ENCODE measurements at regions of chr3 and their contacts with region 1.

Region 1: GRCh38 chr3:48918388-48919214 is at the start of gene ARIH2:
- DNase-seq: peak; percentile 95
- H3K4me3 ChIP-seq: peak within 1 kb of the TSS; percentile 78
- H3K27ac ChIP-seq: peak within 1 kb of the TSS; percentile 93
- H3K4me1 ChIP-seq: peaks cover 23% of the 10 kb centered on the region
- CTCF ChIP-seq: peak; percentile 27; the same call in 1 of the 2 replicates
- total RNA-seq, gene ARIH2: 121 and 124 TPM in 2 replicates

Region 2: GRCh38 chr3:48273594-48274211 is 644.9 kb before region 1 on chr3:
- CTCF ChIA-PET with region 1: no interaction called
- POLR2A ChIA-PET with region 1: no interaction called
- intact Hi-C with region 1: no loop called
- DNase-seq: peak; percentile 76
- H3K4me3 ChIP-seq: no peak overlapping the region
- H3K27ac ChIP-seq: no peak overlapping the region
- H3K4me1 ChIP-seq: no peaks in the 10 kb centered on the region
- CTCF ChIP-seq: peak; percentile 88

Region 3: GRCh38 chr3:48743773-48744172 is 174.8 kb before region 1 on chr3:
- CTCF ChIA-PET with region 1: no interaction called
- POLR2A ChIA-PET with region 1: no interaction called
- intact Hi-C with region 1: no loop called
- DNase-seq: no peak
- H3K4me3 ChIP-seq: no peak overlapping the region
- H3K27ac ChIP-seq: no peak overlapping the region
- H3K4me1 ChIP-seq: peaks cover 5% of the 10 kb centered on the region
- CTCF ChIP-seq: no peak

Region 4: GRCh38 chr3:48847504-48848423 is 70.8 kb before region 1 on chr3 and contains the start of gene PRKAR2A:
- CTCF ChIA-PET with region 1: no interaction called
- POLR2A ChIA-PET with region 1: interaction called, 3 read pairs
- intact Hi-C with region 1: loop called (anchors 2 kb)
- DNase-seq: peak; percentile 90
- H3K4me3 ChIP-seq: peak within 1 kb of the TSS; percentile 82
- H3K27ac ChIP-seq: no peak within 1 kb of the TSS
- H3K4me1 ChIP-seq: peaks cover 18% of the 10 kb centered on the region
- CTCF ChIP-seq: no peak
- total RNA-seq, gene PRKAR2A: 13.8 and 16.0 TPM in 2 replicates

Region 5: GRCh38 chr3:48898383-48899234 is 20.0 kb before region 1 on chr3 and contains the start of gene SLC25A20:
- CTCF ChIA-PET with region 1: interaction called, 3 read pairs
- POLR2A ChIA-PET with region 1: interaction called, 10 read pairs
- intact Hi-C with region 1: loop called (anchors 1 kb)
- DNase-seq: peak; percentile 93
- H3K4me3 ChIP-seq: peak within 1 kb of the TSS; percentile 85
- H3K27ac ChIP-seq: peak within 1 kb of the TSS; percentile 36
- H3K4me1 ChIP-seq: peaks cover 36% of the 10 kb centered on the region
- CTCF ChIP-seq: 0 out of 2 replicates have a peak, but pooled peaks have one; percentile 25
- total RNA-seq, gene SLC25A20: 20.9 and 21.3 TPM in 2 replicates